ENCODE measurements at regions of chr5 and their contacts with region 1.

Region 1: GRCh38 chr5:59799668-59800346 is 93.7 kb downstream of the PDE4D start:
- DNase-seq: no peak
- ATAC-seq: peak; percentile 75

Region 2: DNA sequence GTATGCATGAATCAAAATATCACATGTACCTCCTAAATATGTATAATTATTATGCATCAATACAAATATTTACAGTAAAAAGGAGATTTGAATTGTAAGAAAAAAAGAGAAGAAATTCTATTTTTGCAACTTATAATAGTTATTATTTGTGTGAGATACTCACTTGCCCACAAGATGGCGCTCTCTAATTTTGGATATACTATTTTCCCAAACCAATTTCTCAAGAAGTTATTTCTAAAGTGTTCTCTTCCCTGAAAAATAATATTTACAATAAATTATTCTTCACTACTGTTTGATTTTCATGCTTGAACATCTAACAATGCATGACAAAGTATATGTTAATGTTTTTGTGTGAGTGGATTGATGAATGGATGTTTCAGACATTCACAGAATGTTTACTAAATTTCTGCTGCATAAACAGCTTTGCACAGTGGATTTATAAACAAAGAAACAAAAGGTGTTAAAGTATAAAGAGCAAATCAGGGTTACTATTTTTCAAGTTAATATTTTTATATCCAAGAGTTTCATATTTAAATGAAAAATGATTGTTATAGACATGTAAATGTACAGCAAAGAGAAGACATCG is 409.6 kb before region 1 on chr5:
- intact Hi-C with region 1: loop called (anchors 5 kb)
- DNase-seq: no peak
- ATAC-seq: no peak

Region 3: GRCh38 chr5:59506285-59506877 is 293.4 kb before region 1 on chr5:
- intact Hi-C with region 1: loop called (anchors 10 kb)
- DNase-seq: no peak
- ATAC-seq: no peak

Measured in left ventricle myocardium superior (tissue), 1 donor.